B cell (primary cell): ENCODE measurements at regions of chr4 and their contacts with region 1.

Region 1: GRCh38 chr4:185597532-185598188 is 62.4 kb upstream of the PDLIM3 start:
- DNase-seq: peak; percentile 79
- ATAC-seq: peak; percentile 76
- H3K4me3 ChIP-seq: no peak overlapping the region
- H3K4me3 Mint-ChIP-seq: no peak overlapping the region
- H3K27ac ChIP-seq: no peak overlapping the region
- H3K27ac Mint-ChIP-seq: no peak overlapping the region
- H3K4me1 ChIP-seq: no peaks in the 10 kb centered on the region
- H3K4me1 Mint-ChIP-seq: peaks cover 7% of the 10 kb centered on the region
- H3K27me3 ChIP-seq: peaks cover 0 to 3% (median 0%) of the 10 kb centered on the region in 4 experiments
- H3K27me3 Mint-ChIP-seq: peaks cover 33% of the 10 kb centered on the region
- CTCF ChIP-seq: peak; percentile 99

Region 2: DNA sequence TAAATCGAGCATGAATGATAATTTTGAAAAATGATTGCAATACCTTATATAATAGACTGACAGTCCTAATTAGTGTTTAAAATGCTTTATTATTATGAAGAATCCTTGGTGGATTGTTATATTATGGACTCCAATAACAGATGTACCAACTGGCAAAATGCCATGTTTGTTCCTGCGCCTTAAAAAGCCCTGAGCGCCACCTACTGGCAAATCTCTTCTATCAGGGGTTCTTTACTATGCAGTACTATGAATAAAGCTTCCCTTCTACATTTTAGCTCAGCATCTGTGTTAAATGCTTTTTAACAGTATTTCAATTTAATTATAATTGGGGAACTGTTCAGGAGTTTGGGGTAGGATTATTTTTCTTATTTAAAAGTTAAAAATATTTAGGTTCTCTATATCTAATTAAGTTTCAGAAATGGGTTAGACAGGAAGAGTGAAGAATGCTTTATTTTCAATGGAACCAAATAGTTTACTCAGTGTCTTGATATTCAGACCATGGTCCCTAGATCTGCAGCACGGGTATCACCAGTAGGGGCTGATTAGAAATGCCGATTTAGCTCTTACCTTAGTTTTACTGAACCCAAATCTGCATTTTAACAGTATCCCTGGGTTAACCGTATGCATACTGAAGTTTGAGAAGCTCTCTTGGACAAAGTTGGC is 413.9 kb before region 1 on chr4:
- CTCF ChIA-PET with region 1: interaction called, 10 read pairs
- POLR2A ChIA-PET with region 1: no interaction called
- intact Hi-C with region 1: no loop called
- DNase-seq: peak; percentile 85
- ATAC-seq: peak; percentile 69
- H3K4me3 ChIP-seq: no peak overlapping the region
- H3K4me3 Mint-ChIP-seq: no peak overlapping the region
- H3K27ac ChIP-seq: no peak overlapping the region
- H3K27ac Mint-ChIP-seq: no peak overlapping the region
- H3K4me1 ChIP-seq: no peaks in the 10 kb centered on the region
- H3K4me1 Mint-ChIP-seq: peaks cover 6% of the 10 kb centered on the region
- H3K27me3 ChIP-seq: no peaks in the 10 kb centered on the region
- H3K27me3 Mint-ChIP-seq: no peaks in the 10 kb centered on the region
- CTCF ChIP-seq: peak; percentile 92

Region 3: GRCh38 chr4:185471235-185472102 is 126.2 kb before region 1 on chr4 and contains the start of gene CCDC110:
- CTCF ChIA-PET with region 1: interaction called, 36 read pairs
- POLR2A ChIA-PET with region 1: interaction called, 3 read pairs
- intact Hi-C with region 1: loop called (anchors 1 kb)
- DNase-seq: peak; percentile 94
- ATAC-seq: peak; percentile 95
- H3K4me3 ChIP-seq: peak within 1 kb of the TSS; percentile 28 to 87 (median 67)
- H3K4me3 Mint-ChIP-seq: peak within 1 kb of the TSS; percentile 95
- H3K27ac ChIP-seq: peak within 1 kb of the TSS; percentile 1 to 58
- H3K27ac Mint-ChIP-seq: peak within 1 kb of the TSS; percentile 83
- H3K4me1 ChIP-seq: peaks cover 11 to 17% of the 10 kb centered on the region in 2 donors
- H3K4me1 Mint-ChIP-seq: peaks cover 17% of the 10 kb centered on the region
- H3K27me3 ChIP-seq: peaks cover 0 to 5% (median 0%) of the 10 kb centered on the region in 4 experiments
- H3K27me3 Mint-ChIP-seq: no peaks in the 10 kb centered on the region
- CTCF ChIP-seq: peak; percentile 76
- total RNA-seq, gene CCDC110: 1.6 and 2.3 TPM in 2 replicates

Region 4: DNA sequence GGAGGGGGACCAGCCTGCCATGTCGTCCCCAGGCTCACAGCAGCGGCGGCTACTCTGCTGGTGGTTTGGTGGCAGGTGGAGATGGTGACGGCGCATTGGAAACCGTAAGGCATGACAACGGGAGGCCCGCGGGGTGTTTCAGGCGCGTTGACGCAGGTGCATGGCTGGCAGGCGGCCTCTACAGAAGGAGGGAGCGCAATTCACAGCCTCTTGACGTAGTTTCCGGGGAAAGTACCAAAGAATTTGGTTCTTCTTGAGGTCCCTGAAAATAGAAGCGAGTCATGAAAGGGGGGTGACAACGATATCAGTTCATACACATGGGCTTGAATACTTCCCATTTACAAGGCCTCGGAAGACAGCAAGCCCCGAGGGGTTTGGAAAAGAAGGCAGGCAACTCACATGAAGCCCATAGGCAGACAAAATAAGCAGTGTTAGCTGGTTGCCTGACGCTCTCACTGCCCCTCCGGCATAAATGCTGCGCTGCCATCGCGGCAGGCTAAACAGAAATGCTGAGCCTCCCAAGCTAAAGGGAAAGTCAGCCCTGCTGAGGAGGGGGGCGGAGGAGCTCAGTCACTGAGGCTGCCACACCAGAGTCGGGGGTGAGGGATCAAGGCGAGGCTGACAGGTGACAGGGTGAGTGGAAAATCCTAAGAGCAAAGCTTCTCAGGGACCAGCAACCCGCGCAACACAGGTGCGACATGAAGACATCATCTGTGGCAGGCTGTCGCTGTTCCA is 10.1 kb before region 1 on chr4:
- CTCF ChIA-PET with region 1: interaction called, 13 read pairs
- POLR2A ChIA-PET with region 1: no interaction called
- intact Hi-C with region 1: loop called (anchors 1 kb)
- DNase-seq: peak; percentile 91
- ATAC-seq: peak; percentile 92
- H3K4me3 ChIP-seq: peak overlapping the region in 4 of 5 experiments; percentile 18 to 59 (median 40)
- H3K4me3 Mint-ChIP-seq: peak overlapping the region; percentile 88
- H3K27ac ChIP-seq: peak overlapping the region in 1 of 2 donors; percentile 58
- H3K27ac Mint-ChIP-seq: peak overlapping the region; percentile 93
- H3K4me1 ChIP-seq: peaks cover 12 to 13% of the 10 kb centered on the region in 2 donors
- H3K4me1 Mint-ChIP-seq: peaks cover 27% of the 10 kb centered on the region
- H3K27me3 ChIP-seq: peaks cover 0 to 13% (median 12%) of the 10 kb centered on the region in 4 experiments
- H3K27me3 Mint-ChIP-seq: peaks cover 49% of the 10 kb centered on the region
- CTCF ChIP-seq: no peak